ENCODE measurements at regions of chr1 and their contacts with region 1.

Region 1: DNA sequence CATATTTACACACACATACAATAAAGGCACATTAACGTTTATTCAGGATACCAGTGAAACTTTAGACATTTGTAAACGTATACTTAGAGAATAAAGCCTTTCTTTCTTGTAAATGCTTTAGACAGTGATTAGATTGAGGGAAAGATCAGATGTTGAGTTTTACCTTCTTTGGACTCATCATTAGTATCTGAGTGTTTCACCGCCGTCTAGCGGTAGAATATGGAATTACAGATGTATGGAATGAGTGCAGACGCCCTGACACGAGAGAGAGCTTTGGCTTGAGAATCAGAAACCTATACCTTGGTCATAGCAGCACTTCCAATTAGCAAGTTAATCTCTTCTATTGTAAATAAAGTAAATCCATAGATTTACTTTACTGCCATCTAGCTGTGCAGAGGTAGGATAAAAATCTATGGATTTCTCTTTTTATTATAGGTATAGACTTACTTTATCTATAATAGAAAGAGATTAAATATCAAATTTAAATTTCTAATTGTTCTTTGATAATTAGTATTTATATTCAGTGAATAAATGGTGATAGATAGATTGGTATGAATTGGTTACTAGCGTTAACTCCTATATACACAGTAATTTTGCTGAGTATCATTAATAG is 12.6 kb downstream of the FLG2 start:
- DNase-seq: peak; percentile 90
- H3K4me3 Mint-ChIP-seq: no peak overlapping the region
- H3K27ac Mint-ChIP-seq: no peak overlapping the region
- H3K4me1 Mint-ChIP-seq: no peaks in the 10 kb centered on the region
- H3K27me3 Mint-ChIP-seq: peaks cover 43% of the 10 kb centered on the region
- CTCF ChIP-seq: peak; percentile 98

Region 2: GRCh38 chr1:152227310-152227928 is 119.8 kb before region 1 on chr1:
- CTCF ChIA-PET with region 1: interaction called, 7 read pairs
- POLR2A ChIA-PET with region 1: interaction called, 4 read pairs
- intact Hi-C with region 1: loop called (anchors 10 kb)
- DNase-seq: peak; percentile 66
- H3K4me3 Mint-ChIP-seq: no peak overlapping the region
- H3K27ac Mint-ChIP-seq: no peak overlapping the region
- H3K4me1 Mint-ChIP-seq: peaks cover 17% of the 10 kb centered on the region
- H3K27me3 Mint-ChIP-seq: no peaks in the 10 kb centered on the region
- CTCF ChIP-seq: peak; percentile 79

Region 3: GRCh38 chr1:152252157-152252556 is 95.1 kb before region 1 on chr1:
- CTCF ChIA-PET with region 1: interaction called, 10 read pairs
- POLR2A ChIA-PET with region 1: no interaction called
- intact Hi-C with region 1: no loop called
- DNase-seq: peak; percentile 49
- H3K4me3 Mint-ChIP-seq: no peak overlapping the region
- H3K27ac Mint-ChIP-seq: peak overlapping the region; percentile 1
- H3K4me1 Mint-ChIP-seq: peaks cover 13% of the 10 kb centered on the region
- H3K27me3 Mint-ChIP-seq: no peaks in the 10 kb centered on the region
- CTCF ChIP-seq: no peak

Region 4: GRCh38 chr1:152335399-152335798 is 11.8 kb before region 1 on chr1:
- CTCF ChIA-PET with region 1: interaction called, 18 read pairs
- POLR2A ChIA-PET with region 1: no interaction called
- intact Hi-C with region 1: no loop called
- DNase-seq: no peak
- H3K4me3 Mint-ChIP-seq: no peak overlapping the region
- H3K27ac Mint-ChIP-seq: no peak overlapping the region
- H3K4me1 Mint-ChIP-seq: no peaks in the 10 kb centered on the region
- H3K27me3 Mint-ChIP-seq: peaks cover 27% of the 10 kb centered on the region
- CTCF ChIP-seq: no peak

Region 5: DNA sequence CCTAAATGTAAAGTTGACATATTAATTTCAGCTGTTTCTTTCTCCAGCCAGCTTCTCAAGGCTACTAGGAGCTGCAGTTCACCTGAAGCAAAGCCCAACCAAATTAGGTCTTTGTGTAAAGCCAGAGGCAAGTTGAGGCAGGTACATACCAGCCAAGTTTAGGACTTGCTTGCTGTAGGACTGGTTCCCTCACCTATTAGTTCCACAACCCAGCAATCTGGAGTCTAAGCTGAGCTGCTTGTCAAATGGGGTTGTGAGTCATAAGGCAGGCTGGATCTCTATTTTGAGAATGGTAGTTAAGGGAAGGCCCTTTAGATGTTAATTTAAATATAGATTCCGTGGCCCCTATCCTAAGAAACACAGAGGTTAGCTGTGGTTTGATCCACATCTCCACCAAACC is 20.2 kb after region 1 on chr1:
- CTCF ChIA-PET with region 1: interaction called, 10 read pairs
- POLR2A ChIA-PET with region 1: no interaction called
- intact Hi-C with region 1: no loop called
- DNase-seq: peak; percentile 34
- H3K4me3 Mint-ChIP-seq: no peak overlapping the region
- H3K27ac Mint-ChIP-seq: no peak overlapping the region
- H3K4me1 Mint-ChIP-seq: no peaks in the 10 kb centered on the region
- H3K27me3 Mint-ChIP-seq: peaks cover 13% of the 10 kb centered on the region
- CTCF ChIP-seq: no peak

Region 6: DNA sequence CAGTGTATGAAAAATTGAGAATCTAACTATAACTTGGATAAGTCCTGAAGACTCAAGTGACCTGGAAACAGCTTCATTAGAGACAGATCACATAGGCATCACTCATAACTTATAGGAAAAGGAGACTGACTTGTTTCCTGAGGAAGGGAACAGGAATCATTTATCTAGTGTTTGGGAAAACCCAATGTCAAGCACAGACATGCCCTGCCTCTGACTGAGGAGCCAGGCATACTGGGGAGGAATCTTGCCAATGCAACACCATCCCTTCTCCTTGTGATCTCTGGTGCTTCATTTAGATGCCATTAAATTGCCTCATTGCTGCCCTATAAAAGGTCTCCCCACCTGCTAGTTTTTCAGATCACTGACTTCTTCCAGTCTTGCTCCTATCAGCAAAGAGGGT is 371.0 kb after region 1 on chr1:
- CTCF ChIA-PET with region 1: no interaction called
- POLR2A ChIA-PET with region 1: no interaction called
- intact Hi-C with region 1: no loop called
- DNase-seq: peak; percentile 72
- H3K4me3 Mint-ChIP-seq: no peak overlapping the region
- H3K27ac Mint-ChIP-seq: peak overlapping the region; percentile 13
- H3K4me1 Mint-ChIP-seq: peaks cover 11% of the 10 kb centered on the region
- H3K27me3 Mint-ChIP-seq: no peaks in the 10 kb centered on the region
- CTCF ChIP-seq: no peak